ENCODE measurements at regions of chr3 and their contacts with region 1.

Region 1: GRCh38 chr3:48439820-48440589 is at the starts of genes CCDC51 and TMA7:
- DNase-seq: peak; percentile 99 to 100 (median 100)

Region 2: GRCh38 chr3:48194446-48195071 is 245.4 kb before region 1 on chr3:
- intact Hi-C with region 1: loop called (anchors 5 kb)
- DNase-seq: peak in 7 of 10 donors; percentile 48 to 93 (median 70)

Region 3: GRCh38 chr3:48232734-48233133 is 207.3 kb before region 1 on chr3:
- intact Hi-C with region 1: loop called (anchors 2 kb)
- DNase-seq: peak; percentile 67 to 97 (median 84)

Region 4: DNA sequence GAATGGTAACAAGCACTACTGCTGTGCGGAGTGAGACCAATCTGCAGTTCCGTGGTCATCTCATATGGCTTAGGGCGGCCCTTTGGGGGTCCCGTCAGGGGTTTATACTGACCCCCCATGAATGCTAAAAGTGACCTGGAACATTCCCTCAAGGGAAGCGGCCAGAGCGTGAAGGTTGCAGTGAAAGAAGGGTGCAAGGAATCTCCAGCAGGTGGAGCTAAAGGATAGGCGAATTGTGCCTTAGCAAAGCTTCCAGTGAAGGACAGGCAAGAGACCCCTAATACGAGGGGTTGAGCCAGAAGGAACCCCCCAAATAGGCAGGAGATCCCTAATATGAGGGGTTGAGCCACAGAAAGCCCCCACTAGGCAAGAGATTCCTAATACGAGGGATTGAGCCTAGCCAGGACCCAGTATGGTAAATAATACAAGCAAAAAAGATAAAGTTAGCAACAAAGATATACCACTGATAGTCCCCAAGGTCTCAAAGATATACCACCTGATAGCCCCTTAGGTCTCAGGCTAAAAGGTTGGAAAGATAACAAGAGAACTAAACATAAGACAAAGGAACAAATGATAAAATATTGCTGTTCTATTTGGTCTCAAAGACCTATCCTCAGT is 166.3 kb before region 1 on chr3:
- intact Hi-C with region 1: loop called (anchors 1 kb)
- DNase-seq: peak in 4 of 10 donors; percentile 32 to 56 (median 46)

Region 5: GRCh38 chr3:48400824-48401433 is 39.1 kb before region 1 on chr3:
- intact Hi-C with region 1: loop called (anchors 1 kb)
- DNase-seq: peak in 5 of 10 donors; percentile 54 to 88 (median 60)